Activated T-helper 2 cell treated with anti-CD3 and anti-CD28 coated beads, Interferon-gamma antibody, Interleukin-2, Interleukin-4, amounts not matched to agents 10 μg/mL and 5 μg/mL and 100 μg/mL, durations not matched to agents 14 hours and 24 hours and 36 hours (primary cell): ENCODE measurements at regions of chrX and their contacts with region 1.

Region 1: DNA sequence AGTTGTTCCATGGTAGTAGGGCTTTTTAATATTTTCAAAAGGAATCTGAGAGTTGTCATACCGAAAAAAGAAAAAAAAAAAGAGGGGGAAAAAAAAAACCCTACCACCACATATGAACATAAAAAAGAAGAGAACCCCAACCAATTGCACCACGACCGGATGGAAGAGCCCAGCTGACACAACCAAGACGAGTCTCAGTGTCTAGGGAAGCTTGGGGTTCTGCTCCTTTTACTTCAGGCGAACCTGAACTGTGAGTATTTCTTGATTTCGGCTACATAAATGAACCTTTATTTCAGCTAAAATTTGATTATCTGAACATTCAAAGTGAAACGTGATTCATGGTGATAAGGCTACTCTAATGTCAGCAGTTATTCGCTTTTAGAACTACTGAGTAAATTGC is at the start of gene GPR34:
- DNase-seq: no peak
- H3K4me3 Mint-ChIP-seq: no peak within 1 kb of the TSS
- H3K27ac Mint-ChIP-seq: no peak within 1 kb of the TSS
- H3K4me1 Mint-ChIP-seq: peaks cover 32% of the 10 kb centered on the region
- H3K27me3 Mint-ChIP-seq: no peaks in the 10 kb centered on the region
- total RNA-seq, gene GPR34: not detected in 2 replicates

Region 2: GRCh38 chrX:41703574-41704029 is 14.8 kb after region 1 on chrX:
- intact Hi-C with region 1: loop called (anchors 2 kb)
- DNase-seq: no peak
- H3K4me3 Mint-ChIP-seq: no peak overlapping the region
- H3K27ac Mint-ChIP-seq: no peak overlapping the region
- H3K4me1 Mint-ChIP-seq: peaks cover 25% of the 10 kb centered on the region
- H3K27me3 Mint-ChIP-seq: no peaks in the 10 kb centered on the region

Region 3: DNA sequence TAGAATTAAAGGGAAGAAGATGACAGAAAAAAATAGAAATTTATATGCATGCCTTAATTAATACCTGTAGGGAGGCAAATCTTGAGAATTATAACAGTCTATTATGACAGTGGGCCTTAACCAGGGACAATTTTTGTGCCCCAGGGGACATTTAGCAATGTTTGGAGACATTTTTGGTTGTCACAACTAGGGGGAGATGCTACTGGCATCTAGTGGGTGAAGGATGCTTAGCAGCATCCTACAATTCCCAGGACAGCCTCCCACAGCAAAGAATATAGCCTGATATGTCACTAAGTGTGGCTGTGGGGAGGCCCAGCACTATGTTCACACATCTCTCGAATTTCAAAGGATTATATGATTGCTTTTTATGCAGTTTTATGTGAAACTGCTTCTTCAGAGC is 45.7 kb after region 1 on chrX:
- intact Hi-C with region 1: loop called (anchors 5 kb)
- DNase-seq: no peak
- H3K4me3 Mint-ChIP-seq: peak overlapping the region; percentile 26
- H3K27ac Mint-ChIP-seq: peak overlapping the region; percentile 89
- H3K4me1 Mint-ChIP-seq: peaks cover 28% of the 10 kb centered on the region
- H3K27me3 Mint-ChIP-seq: no peaks in the 10 kb centered on the region